GM12878 (cell line): ENCODE measurements at regions of chr14 and their contacts with region 1.

Region 1: DNA sequence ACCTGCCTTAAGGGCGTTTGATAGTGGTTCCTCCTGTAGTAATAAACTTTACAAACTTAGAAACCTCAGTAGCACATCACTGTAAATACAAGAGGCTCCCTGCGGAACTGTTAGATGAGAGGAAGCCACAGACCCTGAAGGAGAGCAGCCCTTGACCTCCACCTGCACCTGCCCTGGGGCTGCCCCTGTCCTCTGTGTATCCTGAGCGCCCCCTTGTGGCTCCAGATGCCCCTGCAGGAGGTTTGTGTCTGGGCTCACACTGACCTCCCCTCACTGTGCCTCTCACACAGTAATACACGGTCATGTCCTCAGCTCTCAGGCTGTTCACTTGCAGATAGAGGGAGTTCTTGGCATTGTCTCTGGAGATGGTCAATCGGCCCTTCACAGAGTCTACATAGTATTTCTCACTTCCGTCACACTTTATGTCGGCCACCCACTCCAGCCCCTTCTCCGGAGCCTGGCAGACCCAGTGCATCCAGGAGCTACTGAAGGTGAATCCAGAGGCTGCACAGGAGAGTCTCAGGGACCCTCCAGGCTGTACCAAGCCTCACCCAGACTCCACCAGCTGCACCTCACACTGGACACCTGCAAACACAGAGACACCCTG is 1059.8 kb downstream of the TMEM121 start:
- DNase-seq: no peak
- ATAC-seq: peak; percentile 100
- H3K4me3 ChIP-seq: no peak overlapping the region
- H3K27ac ChIP-seq: no peak overlapping the region
- H3K4me1 ChIP-seq: peaks cover 6% of the 10 kb centered on the region
- H3K27me3 ChIP-seq: no peaks in the 10 kb centered on the region
- CTCF ChIP-seq: peak; percentile 72 to 94 (median 90)
- EP300 ChIP-seq: no peak
- POLR2A ChIP-seq: no peak
- RAD21 ChIP-seq: peak; percentile 63; the same call in 1 of the 2 replicates

Region 2: DNA sequence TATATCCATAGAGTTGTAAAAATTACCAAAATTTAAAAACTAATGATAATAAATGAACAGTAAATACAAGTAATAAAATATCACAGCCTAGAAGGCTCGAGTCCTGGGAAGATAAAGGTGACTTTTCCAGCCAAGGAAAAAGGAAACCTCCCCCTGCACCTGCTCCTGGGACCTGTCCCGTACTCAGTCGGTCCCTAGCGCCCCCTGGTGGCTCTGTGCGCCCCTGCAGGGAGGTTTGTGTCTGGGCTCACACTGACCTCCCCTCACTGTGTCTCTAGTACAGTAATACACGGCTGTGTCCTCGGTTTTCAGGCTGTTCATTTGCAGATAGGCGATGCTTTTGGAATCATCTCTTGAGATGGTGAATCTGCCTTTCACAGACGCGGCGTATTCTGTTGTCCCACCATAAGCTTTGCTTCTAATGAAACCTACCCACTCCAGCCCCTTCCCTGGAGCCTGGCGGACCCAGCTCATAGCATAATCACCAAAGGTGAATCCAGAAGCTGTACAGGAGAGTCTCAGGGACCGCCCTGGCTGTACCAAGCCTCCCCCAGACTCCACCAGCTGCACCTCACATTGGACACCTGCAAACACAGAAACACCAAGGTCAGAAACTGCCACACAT is 29.4 kb before region 1 on chr14:
- CTCF ChIA-PET with region 1: interaction called, 27 read pairs
- POLR2A ChIA-PET with region 1: no interaction called
- RAD21 ChIA-PET with region 1: interaction called, 3 read pairs
- SMC1A ChIA-PET with region 1: interaction called, 3 read pairs
- in situ Hi-C with region 1: no loop called
- intact Hi-C with region 1: no loop called
- DNase-seq: no peak
- ATAC-seq: peak; percentile 89
- H3K4me3 ChIP-seq: no peak overlapping the region
- H3K27ac ChIP-seq: no peak overlapping the region
- H3K4me1 ChIP-seq: no peaks in the 10 kb centered on the region
- H3K27me3 ChIP-seq: no peaks in the 10 kb centered on the region
- CTCF ChIP-seq: peak; percentile 71 to 94 (median 93)
- EP300 ChIP-seq: no peak
- POLR2A ChIP-seq: no peak
- RAD21 ChIP-seq: peak; percentile 73

Region 3: GRCh38 chr14:106564058-106564656 is 22.0 kb before region 1 on chr14:
- CTCF ChIA-PET with region 1: interaction called, 27 read pairs
- POLR2A ChIA-PET with region 1: no interaction called
- RAD21 ChIA-PET with region 1: no interaction called
- SMC1A ChIA-PET with region 1: interaction called, 4 read pairs
- in situ Hi-C with region 1: no loop called
- intact Hi-C with region 1: no loop called
- DNase-seq: no peak
- ATAC-seq: peak; percentile 96
- H3K4me3 ChIP-seq: no peak overlapping the region
- H3K27ac ChIP-seq: no peak overlapping the region
- H3K4me1 ChIP-seq: no peaks in the 10 kb centered on the region
- H3K27me3 ChIP-seq: peaks cover 0 to 2% of the 10 kb centered on the region in 2 experiments; a peak in 2 of 4 replicates
- CTCF ChIP-seq: peak; percentile 85 to 96 (median 96)
- EP300 ChIP-seq: no peak
- POLR2A ChIP-seq: no peak
- RAD21 ChIP-seq: peak; percentile 69

Region 4: GRCh38 chr14:106605548-106606448 is 19.6 kb after region 1 on chr14:
- CTCF ChIA-PET with region 1: interaction called, 65 read pairs
- POLR2A ChIA-PET with region 1: no interaction called
- RAD21 ChIA-PET with region 1: no interaction called
- SMC1A ChIA-PET with region 1: interaction called, 3 read pairs
- in situ Hi-C with region 1: no loop called
- intact Hi-C with region 1: no loop called
- DNase-seq: peak; percentile 21
- ATAC-seq: peak; percentile 100
- H3K4me3 ChIP-seq: no peak overlapping the region
- H3K27ac ChIP-seq: no peak overlapping the region
- H3K4me1 ChIP-seq: no peaks in the 10 kb centered on the region
- H3K27me3 ChIP-seq: peaks cover 0 to 3% of the 10 kb centered on the region in 2 experiments; a peak in 1 of 4 replicates
- CTCF ChIP-seq: peak; percentile 69 to 91 (median 85)
- EP300 ChIP-seq: no peak
- POLR2A ChIP-seq: no peak
- RAD21 ChIP-seq: peak; percentile 55